B cell (primary cell): ENCODE measurements at regions of chr5 and their contacts with region 1.

Region 1: GRCh38 chr5:12095808-12096281 is 191.6 kb upstream of the CTNND2 start:
- DNase-seq: no peak
- ATAC-seq: no peak
- H3K4me3 ChIP-seq: no peak overlapping the region
- H3K4me3 Mint-ChIP-seq: no peak overlapping the region
- H3K27ac ChIP-seq: no peak overlapping the region
- H3K27ac Mint-ChIP-seq: no peak overlapping the region
- H3K4me1 ChIP-seq: no peaks in the 10 kb centered on the region
- H3K4me1 Mint-ChIP-seq: no peaks in the 10 kb centered on the region
- H3K27me3 ChIP-seq: no peaks in the 10 kb centered on the region
- H3K27me3 Mint-ChIP-seq: no peaks in the 10 kb centered on the region
- CTCF ChIP-seq: no peak

Region 2: DNA sequence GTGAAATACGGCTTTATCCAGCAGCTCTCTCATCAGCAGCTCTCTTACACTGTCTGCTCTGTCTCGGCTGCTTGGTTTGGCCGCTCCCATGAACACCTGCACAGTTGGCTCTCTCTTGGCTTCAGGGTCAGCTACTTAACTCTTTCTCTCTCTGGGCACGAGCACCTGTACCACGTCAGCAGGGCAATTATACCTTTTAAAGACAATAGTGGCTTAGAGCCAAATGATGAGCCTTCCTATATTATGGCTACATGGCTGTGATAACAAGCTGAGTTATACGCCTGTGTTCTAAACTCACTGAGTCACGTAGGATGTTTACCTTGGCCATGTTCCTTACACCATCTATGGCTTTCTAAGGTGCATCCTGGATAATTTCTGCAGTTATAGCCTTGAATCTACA is 122.4 kb before region 1 on chr5:
- CTCF ChIA-PET with region 1: no interaction called
- POLR2A ChIA-PET with region 1: no interaction called
- intact Hi-C with region 1: no loop called
- DNase-seq: no peak
- ATAC-seq: no peak
- H3K4me3 ChIP-seq: no peak overlapping the region
- H3K4me3 Mint-ChIP-seq: no peak overlapping the region
- H3K27ac ChIP-seq: no peak overlapping the region
- H3K27ac Mint-ChIP-seq: no peak overlapping the region
- H3K4me1 ChIP-seq: no peaks in the 10 kb centered on the region
- H3K4me1 Mint-ChIP-seq: no peaks in the 10 kb centered on the region
- H3K27me3 ChIP-seq: no peaks in the 10 kb centered on the region
- H3K27me3 Mint-ChIP-seq: no peaks in the 10 kb centered on the region
- CTCF ChIP-seq: no peak

Region 3: DNA sequence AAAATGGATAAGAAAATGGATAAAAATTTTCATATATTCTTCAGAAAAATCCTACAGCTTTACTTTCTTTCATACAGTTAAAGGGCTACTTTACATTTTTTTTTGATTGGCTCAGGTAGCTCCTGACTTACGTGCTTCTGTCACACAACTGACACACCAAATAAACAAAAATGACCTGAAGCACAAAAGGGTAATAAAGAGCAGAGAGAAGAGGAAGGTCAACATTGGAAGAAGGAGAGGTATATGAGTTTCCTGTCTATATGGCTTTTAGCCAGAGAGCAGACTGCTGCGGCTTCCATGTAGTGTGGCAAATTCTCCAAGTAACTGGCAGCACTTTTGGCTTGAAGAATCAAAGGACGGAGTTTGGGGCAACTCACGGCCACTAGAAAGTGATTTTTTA is 20.5 kb before region 1 on chr5:
- CTCF ChIA-PET with region 1: no interaction called
- POLR2A ChIA-PET with region 1: no interaction called
- intact Hi-C with region 1: no loop called
- DNase-seq: no peak
- ATAC-seq: no peak
- H3K4me3 ChIP-seq: no peak overlapping the region
- H3K4me3 Mint-ChIP-seq: no peak overlapping the region
- H3K27ac ChIP-seq: no peak overlapping the region
- H3K27ac Mint-ChIP-seq: no peak overlapping the region
- H3K4me1 ChIP-seq: no peaks in the 10 kb centered on the region
- H3K4me1 Mint-ChIP-seq: no peaks in the 10 kb centered on the region
- H3K27me3 ChIP-seq: no peaks in the 10 kb centered on the region
- H3K27me3 Mint-ChIP-seq: no peaks in the 10 kb centered on the region
- CTCF ChIP-seq: no peak

Region 4: GRCh38 chr5:12119657-12120056 is 23.8 kb after region 1 on chr5:
- CTCF ChIA-PET with region 1: no interaction called
- POLR2A ChIA-PET with region 1: no interaction called
- intact Hi-C with region 1: loop called (anchors 1 kb)
- DNase-seq: no peak
- ATAC-seq: no peak
- H3K4me3 ChIP-seq: no peak overlapping the region
- H3K4me3 Mint-ChIP-seq: no peak overlapping the region
- H3K27ac ChIP-seq: no peak overlapping the region
- H3K27ac Mint-ChIP-seq: no peak overlapping the region
- H3K4me1 ChIP-seq: no peaks in the 10 kb centered on the region
- H3K4me1 Mint-ChIP-seq: no peaks in the 10 kb centered on the region
- H3K27me3 ChIP-seq: no peaks in the 10 kb centered on the region
- H3K27me3 Mint-ChIP-seq: no peaks in the 10 kb centered on the region
- CTCF ChIP-seq: no peak